GM12878 (cell line): ENCODE measurements at regions of chr3 and their contacts with region 1.

Region 1: GRCh38 chr3:52385157-52385556 is 59.7 kb downstream of the SEMA3G start:
- DNase-seq: no peak
- ATAC-seq: peak; percentile 90
- H3K4me3 ChIP-seq: no peak overlapping the region
- H3K27ac ChIP-seq: no peak overlapping the region
- H3K4me1 ChIP-seq: no peaks in the 10 kb centered on the region; the same call in 1 of the 2 replicates
- H3K27me3 ChIP-seq: no peaks in the 10 kb centered on the region
- CTCF ChIP-seq: peak; percentile 59 to 73 (median 72)
- EP300 ChIP-seq: no peak
- POLR2A ChIP-seq: no peak
- RAD21 ChIP-seq: peak; percentile 55

Region 2: DNA sequence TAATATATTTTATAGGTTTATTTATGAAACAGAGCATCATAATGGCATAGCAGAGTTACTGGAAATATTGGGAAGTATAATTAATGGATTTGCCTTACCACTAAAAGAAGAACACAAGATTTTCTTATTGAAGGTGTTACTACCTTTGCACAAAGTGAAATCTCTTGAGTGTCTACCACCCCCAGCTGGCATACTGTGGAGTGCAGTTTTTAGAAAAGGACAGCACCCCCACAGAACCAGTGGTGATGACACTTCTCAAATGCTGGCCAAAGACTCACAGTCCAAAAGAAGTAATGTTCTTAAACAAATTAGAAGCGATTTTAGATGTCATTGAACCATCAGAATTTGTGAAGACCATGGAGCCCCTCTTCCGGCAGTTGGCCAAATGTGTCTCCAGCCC is 11.0 kb before region 1 on chr3:
- CTCF ChIA-PET with region 1: interaction called, 11 read pairs
- POLR2A ChIA-PET with region 1: interaction called, 4 read pairs
- RAD21 ChIA-PET with region 1: no interaction called
- SMC1A ChIA-PET with region 1: interaction called, 5 read pairs
- in situ Hi-C with region 1: no loop called
- intact Hi-C with region 1: no loop called
- DNase-seq: no peak
- ATAC-seq: peak; percentile 57
- H3K4me3 ChIP-seq: no peak overlapping the region; the same call in 1 of the 2 replicates
- H3K27ac ChIP-seq: no peak overlapping the region
- H3K4me1 ChIP-seq: peaks cover 13% of the 10 kb centered on the region
- H3K27me3 ChIP-seq: no peaks in the 10 kb centered on the region; a peak in 1 of 4 replicates
- CTCF ChIP-seq: peak in 1 of 3 experiments; percentile 22; a peak in 1 of 6 replicates
- EP300 ChIP-seq: no peak
- POLR2A ChIP-seq: no peak
- RAD21 ChIP-seq: peak; percentile 37; the same call in 1 of the 2 replicates

Region 3: DNA sequence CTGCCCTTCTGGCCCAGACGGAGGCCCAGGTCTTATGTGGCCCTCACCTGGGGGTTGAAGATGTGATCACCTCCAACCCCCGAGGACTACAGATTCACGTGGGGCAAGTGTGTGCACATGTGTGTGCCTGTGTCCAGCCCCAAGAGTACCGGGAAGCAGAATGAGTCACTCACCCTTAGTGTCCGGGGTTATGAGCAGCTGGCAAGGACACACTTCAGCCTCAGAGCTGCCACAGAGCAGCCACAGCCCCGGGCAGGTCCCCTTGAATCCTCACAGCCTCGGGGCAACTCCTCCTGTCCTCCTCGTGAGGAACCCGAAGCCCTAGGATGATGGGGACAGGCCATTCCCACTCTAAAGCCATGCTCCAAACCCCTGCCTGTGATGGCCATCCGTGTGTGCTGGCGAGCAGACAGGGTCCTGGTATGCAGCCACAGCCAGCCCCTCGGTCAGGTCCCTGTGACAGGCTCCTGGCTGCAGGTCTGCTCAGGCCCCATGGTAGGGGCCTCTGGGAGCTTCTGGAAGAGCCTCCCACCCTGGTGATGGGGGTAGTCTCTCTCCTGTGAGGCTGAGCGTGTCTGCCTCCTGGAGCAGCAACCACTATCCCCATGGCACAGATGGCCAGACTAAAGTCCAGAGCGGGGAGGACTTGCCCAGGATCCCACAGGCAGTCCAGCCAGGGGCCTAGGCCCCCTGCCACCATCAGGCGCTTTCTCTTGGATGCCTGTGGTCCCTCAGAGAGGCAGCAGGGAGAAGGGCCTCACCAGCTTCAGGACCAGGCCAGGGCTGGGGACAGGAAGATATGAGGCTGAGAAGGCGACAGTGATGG is 110.8 kb after region 1 on chr3:
- CTCF ChIA-PET with region 1: no interaction called
- POLR2A ChIA-PET with region 1: no interaction called
- RAD21 ChIA-PET with region 1: no interaction called
- SMC1A ChIA-PET with region 1: no interaction called
- in situ Hi-C with region 1: no loop called
- intact Hi-C with region 1: no loop called
- DNase-seq: no peak
- ATAC-seq: no peak
- H3K4me3 ChIP-seq: no peak overlapping the region
- H3K27ac ChIP-seq: no peak overlapping the region
- H3K4me1 ChIP-seq: no peaks in the 10 kb centered on the region
- H3K27me3 ChIP-seq: no peaks in the 10 kb centered on the region
- CTCF ChIP-seq: no peak
- EP300 ChIP-seq: no peak
- POLR2A ChIP-seq: no peak
- RAD21 ChIP-seq: no peak

Region 4: GRCh38 chr3:52962160-52962559 is 577.0 kb after region 1 on chr3:
- CTCF ChIA-PET with region 1: no interaction called
- POLR2A ChIA-PET with region 1: no interaction called
- RAD21 ChIA-PET with region 1: no interaction called
- SMC1A ChIA-PET with region 1: no interaction called
- in situ Hi-C with region 1: no loop called
- intact Hi-C with region 1: no loop called
- DNase-seq: no peak
- ATAC-seq: no peak
- H3K4me3 ChIP-seq: no peak overlapping the region
- H3K27ac ChIP-seq: no peak overlapping the region
- H3K4me1 ChIP-seq: no peaks in the 10 kb centered on the region
- H3K27me3 ChIP-seq: no peaks in the 10 kb centered on the region
- CTCF ChIP-seq: no peak
- EP300 ChIP-seq: no peak
- POLR2A ChIP-seq: no peak
- RAD21 ChIP-seq: no peak